RWPE1 (cell line): ENCODE measurements at regions of chr3 and their contacts with region 1.

Region 1: GRCh38 chr3:147630921-147631415 is 221.8 kb downstream of the ZIC1 start:
- DNase-seq: no peak
- H3K27ac ChIP-seq: no peak overlapping the region
- CTCF ChIP-seq: no peak

Region 2: DNA sequence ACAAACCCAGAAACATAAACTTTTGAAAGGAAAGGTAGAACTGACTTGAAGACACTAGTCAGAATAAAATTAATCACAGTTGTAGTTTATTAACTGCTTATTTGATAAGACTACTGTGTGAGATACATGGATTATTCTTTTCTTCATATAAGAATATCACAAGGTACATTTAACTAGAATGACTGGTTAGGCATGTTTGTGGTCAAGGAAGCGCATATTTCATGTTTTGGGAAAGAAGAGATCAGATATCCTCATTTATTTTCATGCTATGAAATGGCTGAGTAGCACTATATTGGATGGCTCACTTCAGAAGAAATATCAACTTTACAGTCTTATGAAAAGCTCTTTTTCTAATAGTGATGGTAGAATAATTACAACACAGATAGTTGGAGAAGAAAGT is 803.6 kb before region 1 on chr3:
- CTCF ChIA-PET with region 1: interaction called, 12 read pairs
- POLR2A ChIA-PET with region 1: no interaction called
- DNase-seq: no peak
- H3K27ac ChIP-seq: no peak overlapping the region
- CTCF ChIP-seq: no peak